Vagina (tissue), 2 donors: ENCODE measurements at regions of chr17 and their contacts with region 1.

Region 1: DNA sequence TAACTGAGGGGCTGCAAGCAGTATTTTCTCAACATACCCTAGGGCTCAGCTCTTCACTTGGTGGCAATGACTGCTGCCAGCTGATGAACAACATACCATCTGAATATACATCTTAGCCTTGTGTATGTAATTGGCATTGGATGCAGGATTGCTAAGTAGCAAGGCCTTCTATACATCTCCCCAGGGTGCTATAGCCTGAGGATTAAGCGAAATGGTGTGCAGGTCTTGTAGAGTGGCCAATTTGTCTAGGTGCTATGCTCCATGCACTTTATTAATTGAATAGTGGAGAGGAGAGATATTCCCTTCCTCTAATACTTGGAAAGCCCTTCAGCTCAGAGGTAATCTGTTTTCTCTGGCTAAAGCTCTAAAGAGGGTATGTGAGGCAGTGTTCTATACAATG is 71.9 kb downstream of the KIF2B start:
- DNase-seq: no peak
- H3K4me3 ChIP-seq: no peak overlapping the region
- H3K27ac ChIP-seq: no peak overlapping the region
- H3K4me1 ChIP-seq: no peaks in the 10 kb centered on the region
- H3K27me3 ChIP-seq: no peaks in the 10 kb centered on the region
- CTCF ChIP-seq: no peak
- POLR2A ChIP-seq: no peak

Region 2: DNA sequence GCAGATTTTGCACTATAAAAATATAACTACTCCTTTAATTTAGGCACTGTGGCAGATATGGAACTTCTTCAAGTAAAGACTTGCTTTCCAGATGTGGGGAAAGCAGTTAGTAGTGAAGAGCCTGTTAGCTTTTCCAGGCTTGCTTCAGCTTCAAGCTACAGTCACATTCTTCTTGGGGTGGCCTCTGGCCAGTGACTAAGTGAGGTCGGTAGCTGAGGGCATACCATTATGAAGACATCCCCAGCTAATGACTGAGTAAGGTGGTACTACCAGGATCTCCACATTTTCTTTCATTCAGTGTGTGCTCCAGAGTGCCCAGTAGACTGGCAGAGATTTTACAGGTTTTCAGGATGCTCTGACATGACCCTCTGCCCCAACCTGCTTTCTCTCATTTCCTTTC is 239.0 kb before region 1 on chr17:
- intact Hi-C with region 1: no loop called
- DNase-seq: no peak
- H3K4me3 ChIP-seq: no peak overlapping the region
- H3K27ac ChIP-seq: no peak overlapping the region
- H3K4me1 ChIP-seq: no peaks in the 10 kb centered on the region
- H3K27me3 ChIP-seq: no peaks in the 10 kb centered on the region
- CTCF ChIP-seq: no peak
- POLR2A ChIP-seq: no peak

Region 3: DNA sequence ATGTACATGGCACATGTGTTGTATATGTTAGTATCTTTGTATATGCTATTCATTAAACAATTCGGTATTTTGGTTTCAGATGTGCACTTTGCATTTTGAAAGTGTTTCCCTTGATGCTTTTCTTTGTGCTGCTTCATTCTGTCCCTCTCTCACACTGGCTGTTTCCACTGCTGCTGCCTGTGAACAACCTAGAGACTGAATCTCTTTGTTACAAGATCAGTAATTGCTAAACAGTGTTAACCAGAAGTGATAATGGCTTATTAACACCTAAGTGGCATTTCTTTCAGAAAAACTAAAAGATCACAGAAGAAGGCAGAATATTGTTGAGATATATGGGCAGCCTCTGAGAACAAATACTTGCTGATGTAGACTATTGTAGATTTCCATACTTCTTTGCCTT is 12.8 kb after region 1 on chr17:
- intact Hi-C with region 1: no loop called
- DNase-seq: no peak
- H3K4me3 ChIP-seq: no peak overlapping the region
- H3K27ac ChIP-seq: no peak overlapping the region
- H3K4me1 ChIP-seq: no peaks in the 10 kb centered on the region
- H3K27me3 ChIP-seq: no peaks in the 10 kb centered on the region
- CTCF ChIP-seq: no peak
- POLR2A ChIP-seq: no peak

Region 4: DNA sequence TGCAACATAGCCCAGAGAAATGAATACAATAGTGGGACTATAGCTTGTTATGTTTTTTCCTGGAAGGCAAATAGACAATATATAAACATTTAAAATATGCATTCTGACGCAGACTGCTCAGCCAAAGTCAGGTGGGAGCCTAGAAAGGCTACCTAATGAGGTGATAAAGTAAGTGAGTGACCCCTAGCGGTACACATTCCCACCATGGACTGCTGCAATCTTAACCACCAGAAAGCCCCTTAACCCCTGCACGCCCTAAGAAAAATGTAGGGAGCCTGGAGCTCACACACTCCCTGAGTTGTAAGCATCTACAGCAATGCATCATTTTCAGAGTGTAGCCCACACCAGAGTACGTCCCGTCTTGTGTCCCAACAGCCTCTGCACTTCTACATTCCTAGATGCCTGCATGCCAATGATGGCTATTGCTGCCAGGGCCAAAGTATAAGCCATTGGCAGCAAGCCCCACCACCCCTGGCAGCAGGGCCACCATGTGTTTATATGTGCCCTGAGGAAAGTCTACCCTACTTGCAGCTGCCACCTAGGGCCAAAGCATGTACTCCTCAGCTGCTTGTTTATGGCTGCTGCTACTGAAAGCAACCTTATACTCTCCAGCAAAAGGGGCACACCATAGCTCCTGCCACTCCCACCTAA is 55.7 kb after region 1 on chr17:
- intact Hi-C with region 1: loop called (anchors 5 kb)
- DNase-seq: no peak
- H3K4me3 ChIP-seq: no peak overlapping the region
- H3K27ac ChIP-seq: no peak overlapping the region
- H3K4me1 ChIP-seq: no peaks in the 10 kb centered on the region
- H3K27me3 ChIP-seq: no peaks in the 10 kb centered on the region
- CTCF ChIP-seq: no peak
- POLR2A ChIP-seq: no peak

Region 5: GRCh38 chr17:53979991-53980390 is 85.4 kb after region 1 on chr17:
- intact Hi-C with region 1: loop called (anchors 10 kb)
- DNase-seq: no peak
- H3K4me3 ChIP-seq: no peak overlapping the region
- H3K27ac ChIP-seq: no peak overlapping the region
- H3K4me1 ChIP-seq: no peaks in the 10 kb centered on the region
- H3K27me3 ChIP-seq: no peaks in the 10 kb centered on the region
- CTCF ChIP-seq: no peak
- POLR2A ChIP-seq: no peak